ENCODE measurements at regions of chr7 and their contacts with region 1.

Region 1: GRCh38 chr7:51430480-51431086 is 114.0 kb upstream of the COBL start:
- DNase-seq: peak; percentile 82
- H3K4me3 Mint-ChIP-seq: no peak overlapping the region
- H3K27ac Mint-ChIP-seq: no peak overlapping the region
- H3K4me1 Mint-ChIP-seq: no peaks in the 10 kb centered on the region
- H3K27me3 Mint-ChIP-seq: peaks cover 52% of the 10 kb centered on the region
- CTCF ChIP-seq: peak; percentile 97

Region 2: GRCh38 chr7:51366930-51367613 is 63.5 kb before region 1 on chr7:
- CTCF ChIA-PET with region 1: interaction called, 3 read pairs
- intact Hi-C with region 1: loop called (anchors 2 kb)
- DNase-seq: peak; percentile 76
- H3K4me3 Mint-ChIP-seq: no peak overlapping the region
- H3K27ac Mint-ChIP-seq: no peak overlapping the region
- H3K4me1 Mint-ChIP-seq: peaks cover 9% of the 10 kb centered on the region
- H3K27me3 Mint-ChIP-seq: peaks cover 13% of the 10 kb centered on the region
- CTCF ChIP-seq: peak; percentile 90

Region 3: DNA sequence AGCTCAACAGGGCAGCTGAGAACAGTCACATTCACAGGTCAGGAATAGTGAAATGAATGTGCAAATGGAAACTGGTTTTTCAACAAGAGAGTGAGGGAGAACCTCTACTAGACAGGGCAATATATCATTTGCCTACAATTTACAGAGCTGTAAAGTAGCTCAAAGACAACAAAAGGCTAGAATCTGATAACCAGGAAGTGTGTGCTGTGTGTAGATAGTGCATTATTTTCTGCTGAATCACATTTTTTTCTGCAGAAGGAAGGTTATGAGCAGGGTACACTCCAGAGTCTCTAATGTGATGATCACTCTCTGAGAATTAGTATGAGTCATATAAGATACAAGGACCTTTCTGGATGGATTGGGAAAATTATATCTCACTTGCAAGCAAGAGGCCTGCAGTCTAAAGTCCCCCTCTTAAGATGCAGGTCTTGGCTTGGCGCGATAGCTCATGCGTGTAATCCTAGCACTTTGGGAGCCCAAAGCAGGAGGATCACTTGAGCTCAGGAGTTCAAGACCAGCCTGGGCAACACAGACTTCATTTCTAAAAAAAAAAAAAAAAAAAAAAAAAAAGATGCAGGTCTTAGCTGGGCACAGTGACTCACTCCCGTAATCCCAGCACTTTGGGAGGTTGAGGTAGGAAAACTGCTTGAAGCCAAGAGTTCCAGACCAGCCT is 54.0 kb before region 1 on chr7:
- CTCF ChIA-PET with region 1: interaction called, 10 read pairs
- intact Hi-C with region 1: no loop called
- DNase-seq: peak; percentile 32
- H3K4me3 Mint-ChIP-seq: no peak overlapping the region
- H3K27ac Mint-ChIP-seq: peak overlapping the region; percentile 29
- H3K4me1 Mint-ChIP-seq: peaks cover 18% of the 10 kb centered on the region
- H3K27me3 Mint-ChIP-seq: no peaks in the 10 kb centered on the region
- CTCF ChIP-seq: no peak

Region 4: GRCh38 chr7:51593628-51594027 is 163.0 kb after region 1 on chr7:
- CTCF ChIA-PET with region 1: no interaction called
- intact Hi-C with region 1: loop called (anchors 5 kb)
- DNase-seq: no peak
- H3K4me3 Mint-ChIP-seq: no peak overlapping the region
- H3K27ac Mint-ChIP-seq: no peak overlapping the region
- H3K4me1 Mint-ChIP-seq: peaks cover 22% of the 10 kb centered on the region
- H3K27me3 Mint-ChIP-seq: no peaks in the 10 kb centered on the region
- CTCF ChIP-seq: no peak

Region 5: DNA sequence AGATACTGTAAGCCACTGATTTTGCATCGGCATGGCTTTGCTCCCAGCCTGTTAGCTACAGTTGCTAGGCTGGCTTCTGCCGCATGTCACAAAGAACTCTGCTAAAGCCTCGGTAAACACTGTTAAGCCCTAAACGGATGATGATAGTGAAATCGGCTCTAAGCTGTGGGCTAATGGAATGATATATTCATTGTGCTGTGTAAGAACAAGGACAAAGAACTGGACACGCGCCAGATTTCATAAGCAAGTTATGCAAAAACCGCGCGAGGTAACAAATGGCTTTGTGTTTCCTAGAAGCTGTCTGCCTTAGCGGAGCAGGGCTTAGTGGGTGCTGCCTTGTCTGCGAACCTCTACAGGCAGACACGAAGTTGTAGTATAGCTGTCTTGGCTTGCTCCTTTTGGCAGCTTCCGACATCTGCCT is 217.4 kb after region 1 on chr7:
- CTCF ChIA-PET with region 1: interaction called, 4 read pairs
- intact Hi-C with region 1: loop called (anchors 5 kb)
- DNase-seq: peak; percentile 66
- H3K4me3 Mint-ChIP-seq: no peak overlapping the region
- H3K27ac Mint-ChIP-seq: no peak overlapping the region
- H3K4me1 Mint-ChIP-seq: peaks cover 10% of the 10 kb centered on the region
- H3K27me3 Mint-ChIP-seq: peaks cover 93% of the 10 kb centered on the region
- CTCF ChIP-seq: no peak

Region 6: DNA sequence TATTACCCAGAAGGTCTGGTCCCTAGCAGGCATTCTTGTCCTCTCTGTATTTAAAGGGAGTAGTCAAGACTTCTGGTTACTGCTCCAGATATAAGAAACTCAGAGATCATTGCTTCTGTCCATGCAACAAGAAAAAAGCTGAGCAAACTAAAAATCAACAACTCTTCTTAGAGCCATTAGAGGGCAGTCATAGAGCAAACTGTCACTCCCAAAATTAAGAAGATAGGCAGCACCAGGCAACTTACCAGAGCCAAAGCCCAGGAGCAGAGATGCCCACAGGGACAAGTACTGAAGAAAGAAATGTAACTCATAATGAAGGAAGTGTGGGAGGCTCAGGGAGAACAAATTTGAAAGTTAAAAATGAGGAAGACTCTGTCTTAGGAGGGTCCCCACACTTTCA is 358.9 kb after region 1 on chr7:
- CTCF ChIA-PET with region 1: no interaction called
- intact Hi-C with region 1: loop called (anchors 5 kb)
- DNase-seq: no peak
- H3K4me3 Mint-ChIP-seq: no peak overlapping the region
- H3K27ac Mint-ChIP-seq: no peak overlapping the region
- H3K4me1 Mint-ChIP-seq: no peaks in the 10 kb centered on the region
- H3K27me3 Mint-ChIP-seq: no peaks in the 10 kb centered on the region
- CTCF ChIP-seq: peak; percentile 18

Region 7: GRCh38 chr7:51867117-51867516 is 436.5 kb after region 1 on chr7:
- CTCF ChIA-PET with region 1: no interaction called
- intact Hi-C with region 1: loop called (anchors 10 kb)
- DNase-seq: no peak
- H3K4me3 Mint-ChIP-seq: no peak overlapping the region
- H3K27ac Mint-ChIP-seq: no peak overlapping the region
- H3K4me1 Mint-ChIP-seq: no peaks in the 10 kb centered on the region
- H3K27me3 Mint-ChIP-seq: no peaks in the 10 kb centered on the region
- CTCF ChIP-seq: no peak